Common myeloid progenitor, CD34-positive (primary cell): ENCODE measurements at regions of chr3 and their contacts with region 1.

Region 1: GRCh38 chr3:157606011-157606851 is 103.0 kb upstream of the VEPH1 start:
- DNase-seq: peak; percentile 77 to 82 (median 82)
- H3K4me3 ChIP-seq: peak overlapping the region in 1 of 7 experiments; percentile 46
- H3K27ac ChIP-seq: no peak overlapping the region
- H3K4me1 ChIP-seq: peaks cover 5 to 41% (median 30%) of the 10 kb centered on the region in 4 experiments
- H3K27me3 ChIP-seq: peaks cover 0 to 7% (median 4%) of the 10 kb centered on the region in 5 experiments

Region 2: DNA sequence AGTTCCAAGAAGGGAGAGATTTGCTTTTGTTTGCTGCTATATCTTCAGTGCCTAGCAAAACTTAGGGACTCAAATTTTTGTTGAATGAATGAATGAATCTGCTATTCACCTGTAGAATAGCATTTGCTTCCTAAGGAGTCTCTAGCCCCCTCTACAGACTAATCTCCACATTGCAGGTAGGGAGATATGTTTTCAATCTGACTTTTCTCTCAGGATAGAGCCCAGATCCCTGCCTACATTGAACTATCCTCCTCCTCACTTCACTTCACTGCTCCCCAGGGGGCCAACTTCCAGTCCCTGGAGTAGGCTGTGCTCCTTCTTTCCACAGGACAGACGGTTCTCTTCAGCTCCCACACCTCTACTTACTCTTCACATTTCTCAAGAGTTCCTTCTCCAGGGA is 251.5 kb before region 1 on chr3:
- CTCF ChIA-PET with region 1: no interaction called
- POLR2A ChIA-PET with region 1: no interaction called
- DNase-seq: peak; percentile 4 to 19 (median 16)
- H3K4me3 ChIP-seq: no peak overlapping the region
- H3K27ac ChIP-seq: no peak overlapping the region
- H3K4me1 ChIP-seq: peaks cover 0 to 18% (median 5%) of the 10 kb centered on the region in 4 experiments
- H3K27me3 ChIP-seq: no peaks in the 10 kb centered on the region

Region 3: GRCh38 chr3:157572559-157573270 is 33.5 kb before region 1 on chr3:
- CTCF ChIA-PET with region 1: interaction called, 17 read pairs
- POLR2A ChIA-PET with region 1: no interaction called
- DNase-seq: peak; percentile 46 to 62 (median 58)
- H3K4me3 ChIP-seq: no peak overlapping the region
- H3K27ac ChIP-seq: no peak overlapping the region
- H3K4me1 ChIP-seq: no peaks in the 10 kb centered on the region
- H3K27me3 ChIP-seq: no peaks in the 10 kb centered on the region

Region 4: DNA sequence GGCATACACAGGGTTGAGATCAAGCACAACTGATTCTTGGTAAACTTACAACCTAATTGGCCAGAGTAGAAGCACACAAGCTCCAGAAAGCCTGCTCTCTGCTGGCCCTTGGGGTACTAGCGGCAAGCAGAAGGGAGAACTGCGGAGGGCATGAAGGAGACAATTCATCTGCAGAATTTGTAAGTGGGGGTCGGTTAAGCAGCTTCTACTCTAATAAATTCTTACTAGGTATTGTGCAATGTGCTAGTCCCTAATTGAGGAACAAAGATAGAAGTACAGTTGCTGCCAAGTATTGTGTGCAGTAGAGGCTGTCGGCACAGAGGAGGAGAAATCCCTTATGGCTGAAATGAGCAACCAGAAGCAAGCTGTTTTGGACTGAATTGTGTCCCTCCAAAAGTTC is 11.8 kb before region 1 on chr3:
- CTCF ChIA-PET with region 1: interaction called, 20 read pairs
- POLR2A ChIA-PET with region 1: no interaction called
- DNase-seq: no peak
- H3K4me3 ChIP-seq: no peak overlapping the region
- H3K27ac ChIP-seq: no peak overlapping the region
- H3K4me1 ChIP-seq: no peaks in the 10 kb centered on the region
- H3K27me3 ChIP-seq: peaks cover 0 to 7% (median 3%) of the 10 kb centered on the region in 5 experiments

Region 5: DNA sequence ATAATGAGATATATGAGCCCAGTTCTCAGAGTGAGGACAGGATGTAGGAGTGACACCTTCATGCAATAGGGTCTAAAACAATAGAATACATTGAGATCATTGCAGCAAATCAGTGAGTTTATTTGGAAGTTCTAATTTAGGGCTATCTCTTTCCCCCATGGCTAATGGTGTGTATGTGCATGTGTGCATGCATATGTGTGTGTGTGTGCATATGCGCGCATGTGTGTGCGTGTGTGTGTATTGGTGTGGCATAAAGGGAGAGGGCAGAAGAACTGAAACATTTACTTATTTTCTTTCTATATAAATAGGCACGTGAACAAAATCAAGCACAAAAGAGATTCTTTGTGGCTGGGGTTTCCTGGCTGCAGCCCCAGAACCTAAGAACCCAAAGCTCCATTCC is 12.7 kb after region 1 on chr3:
- CTCF ChIA-PET with region 1: interaction called, 17 read pairs
- POLR2A ChIA-PET with region 1: no interaction called
- DNase-seq: peak in 2 of 3 donors; percentile 20 to 29
- H3K4me3 ChIP-seq: no peak overlapping the region
- H3K27ac ChIP-seq: no peak overlapping the region
- H3K4me1 ChIP-seq: no peaks in the 10 kb centered on the region
- H3K27me3 ChIP-seq: peaks cover 0 to 68% (median 22%) of the 10 kb centered on the region in 5 experiments

Region 6: DNA sequence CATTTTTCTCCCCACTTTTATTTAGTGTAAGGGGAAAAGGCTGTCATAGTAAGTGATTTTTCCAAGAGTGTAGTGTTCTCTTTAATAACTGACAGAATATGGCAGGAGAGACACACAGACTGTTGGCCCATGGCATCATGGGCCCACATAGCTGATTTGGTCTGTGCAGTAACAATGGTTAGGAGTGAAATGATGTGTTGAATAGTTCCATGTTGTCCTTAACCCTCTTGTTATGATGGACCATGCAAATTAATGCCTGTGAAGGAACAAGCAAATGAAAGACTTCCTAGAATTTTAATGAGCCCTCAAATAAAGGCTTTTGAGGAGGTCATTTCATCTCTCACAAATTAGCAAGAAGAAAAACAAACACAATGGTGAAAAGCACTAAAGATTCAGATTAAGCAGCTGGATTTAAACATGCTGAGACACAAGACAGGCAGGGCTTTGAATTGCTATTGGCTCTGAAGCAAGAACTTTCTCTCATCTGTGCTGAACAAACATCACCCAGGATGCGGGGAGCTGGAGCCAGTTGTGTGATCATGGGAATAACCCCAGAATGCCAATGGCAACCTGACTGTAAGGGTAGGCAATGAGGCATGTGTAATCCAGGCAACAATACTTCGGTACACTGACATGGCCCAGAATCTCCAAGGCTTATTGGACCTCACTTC is 33.7 kb after region 1 on chr3:
- CTCF ChIA-PET with region 1: no interaction called
- POLR2A ChIA-PET with region 1: no interaction called
- DNase-seq: no peak
- H3K4me3 ChIP-seq: no peak overlapping the region
- H3K27ac ChIP-seq: no peak overlapping the region
- H3K4me1 ChIP-seq: no peaks in the 10 kb centered on the region
- H3K27me3 ChIP-seq: peaks cover 0 to 7% (median 0%) of the 10 kb centered on the region in 5 experiments